Activated CD4-positive, alpha-beta T cell treated with anti-CD3 and anti-CD28 coated beads, Interleukin-2, amount 10 ng/mL, durations not matched to agents 24 days and 14 days (primary cell): ENCODE measurements at regions of chr6 and their contacts with region 1.

Region 1: GRCh38 chr6:155126727-155127439 is 131.8 kb downstream of the TIAM2 start:
- DNase-seq: peak; percentile 72
- H3K4me3 Mint-ChIP-seq: peak overlapping the region; percentile 68
- H3K27ac Mint-ChIP-seq: peak overlapping the region; percentile 97
- H3K4me1 Mint-ChIP-seq: peaks cover 51% of the 10 kb centered on the region
- H3K27me3 Mint-ChIP-seq: no peaks in the 10 kb centered on the region

Region 2: GRCh38 chr6:154569156-154569862 is 557.6 kb before region 1 on chr6:
- intact Hi-C with region 1: no loop called
- DNase-seq: no peak
- H3K4me3 Mint-ChIP-seq: no peak overlapping the region
- H3K27ac Mint-ChIP-seq: no peak overlapping the region
- H3K4me1 Mint-ChIP-seq: no peaks in the 10 kb centered on the region
- H3K27me3 Mint-ChIP-seq: peaks cover 2% of the 10 kb centered on the region

Region 3: GRCh38 chr6:154995284-154996015 is 131.4 kb before region 1 on chr6 and contains the start of gene TIAM2:
- intact Hi-C with region 1: loop called (anchors 5 kb)
- DNase-seq: peak; percentile 76
- H3K4me3 Mint-ChIP-seq: peak within 1 kb of the TSS; percentile 68
- H3K27ac Mint-ChIP-seq: peak within 1 kb of the TSS; percentile 64
- H3K4me1 Mint-ChIP-seq: peaks cover 15% of the 10 kb centered on the region
- H3K27me3 Mint-ChIP-seq: peaks cover 24% of the 10 kb centered on the region
- total RNA-seq, gene TIAM2: 86.9 and 91.9 TPM in 2 replicates

Region 4: GRCh38 chr6:155103816-155104366 is 23.0 kb before region 1 on chr6:
- intact Hi-C with region 1: loop called (anchors 1 kb)
- DNase-seq: peak; percentile 61
- H3K4me3 Mint-ChIP-seq: peak overlapping the region; percentile 28
- H3K27ac Mint-ChIP-seq: peak overlapping the region; percentile 65
- H3K4me1 Mint-ChIP-seq: peaks cover 44% of the 10 kb centered on the region
- H3K27me3 Mint-ChIP-seq: peaks cover 2% of the 10 kb centered on the region

Region 5: DNA sequence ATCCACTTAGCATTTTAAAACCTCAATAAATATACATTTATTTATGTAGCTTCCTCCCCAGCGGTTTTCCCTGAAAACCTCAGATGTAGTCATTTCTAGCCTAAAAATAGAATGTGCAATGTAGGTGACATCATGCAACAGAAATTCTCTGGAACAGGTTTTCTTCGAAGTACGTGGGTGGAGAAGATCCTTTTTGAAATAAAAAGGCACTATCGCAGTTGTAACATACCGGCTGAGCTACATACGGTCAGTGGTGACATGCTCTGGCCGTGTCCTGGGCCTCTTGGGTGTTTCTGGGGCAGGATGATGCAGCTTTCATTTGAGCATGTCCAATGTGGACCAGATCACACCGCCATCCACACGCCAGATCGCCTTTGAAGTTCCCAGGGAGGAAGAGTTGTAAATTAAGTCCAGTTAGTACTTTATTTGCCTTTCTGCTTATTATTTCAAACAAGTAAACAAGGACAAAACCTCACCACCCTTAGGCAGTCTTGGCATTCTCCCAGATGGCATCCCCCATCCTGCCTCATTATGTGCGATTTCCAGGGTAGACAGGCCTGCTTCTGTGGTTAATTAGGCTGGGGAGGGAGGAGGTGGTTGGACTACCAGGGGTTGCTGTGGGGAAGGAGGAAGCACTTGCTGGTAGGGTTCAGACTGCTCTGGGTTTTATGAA is 27.4 kb after region 1 on chr6:
- intact Hi-C with region 1: loop called (anchors 1 kb)
- DNase-seq: peak; percentile 86
- H3K4me3 Mint-ChIP-seq: peak overlapping the region; percentile 53
- H3K27ac Mint-ChIP-seq: peak overlapping the region; percentile 88
- H3K4me1 Mint-ChIP-seq: peaks cover 73% of the 10 kb centered on the region
- H3K27me3 Mint-ChIP-seq: no peaks in the 10 kb centered on the region

Region 6: DNA sequence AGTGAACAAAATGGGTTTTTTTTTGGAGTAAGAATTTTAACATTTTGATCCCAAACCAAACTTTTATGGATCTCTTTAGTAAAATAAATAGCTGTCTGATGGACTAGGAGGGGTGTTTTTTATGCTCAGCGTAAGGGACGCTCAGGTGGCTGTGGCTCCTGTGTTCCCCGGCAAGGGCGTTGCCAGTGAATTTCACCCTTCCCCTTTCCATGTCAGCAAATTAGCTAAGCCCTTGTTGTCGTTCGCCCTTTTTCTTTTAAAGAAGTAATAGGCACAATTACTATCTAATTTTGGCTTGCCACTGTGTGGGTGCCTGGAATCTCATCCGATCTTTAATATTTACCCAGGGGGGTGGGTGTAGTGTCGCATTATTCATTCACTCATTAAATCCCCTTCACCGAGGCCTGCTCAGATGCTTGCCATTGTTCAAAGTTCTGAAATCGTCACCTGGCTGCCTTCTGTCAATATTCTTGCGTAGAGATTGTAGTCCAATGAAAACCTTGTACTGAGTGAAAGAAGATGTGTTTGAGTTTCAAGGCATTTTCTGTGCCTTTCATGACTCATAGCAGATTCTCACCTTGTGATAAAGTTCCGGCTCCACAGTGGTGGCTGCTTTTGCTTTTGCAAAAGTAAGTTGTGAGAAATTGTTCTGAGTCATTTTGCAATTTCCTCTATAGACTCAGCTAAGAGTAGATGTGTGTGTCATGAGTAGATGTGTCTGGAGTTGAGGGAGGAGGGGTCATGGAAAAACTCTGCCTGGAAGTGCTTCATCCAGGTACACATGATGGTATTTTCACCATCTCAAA is 97.0 kb after region 1 on chr6:
- intact Hi-C with region 1: loop called (anchors 1 kb)
- DNase-seq: peak; percentile 85
- H3K4me3 Mint-ChIP-seq: peak overlapping the region; percentile 56
- H3K27ac Mint-ChIP-seq: peak overlapping the region; percentile 77
- H3K4me1 Mint-ChIP-seq: peaks cover 25% of the 10 kb centered on the region
- H3K27me3 Mint-ChIP-seq: no peaks in the 10 kb centered on the region